SK-N-SH (cell line): ENCODE measurements at regions of chr10 and their contacts with region 1.

Region 1: GRCh38 chr10:60816628-60817397 is 38.5 kb downstream of the CDK1 start:
- DNase-seq: peak; percentile 68
- H3K4me3 ChIP-seq: no peak overlapping the region
- H3K27ac ChIP-seq: peak overlapping the region; percentile 39 to 88; a peak in 3 of 4 replicates
- H3K4me1 ChIP-seq: peaks cover 2 to 32% of the 10 kb centered on the region in 2 experiments
- H3K27me3 ChIP-seq: no peaks in the 10 kb centered on the region
- CTCF ChIP-seq: peak; percentile 89
- EP300 ChIP-seq: peak in 1 of 2 experiments; percentile 35; a peak in 1 of 4 replicates
- RAD21 ChIP-seq: peak; percentile 96

Region 2: DNA sequence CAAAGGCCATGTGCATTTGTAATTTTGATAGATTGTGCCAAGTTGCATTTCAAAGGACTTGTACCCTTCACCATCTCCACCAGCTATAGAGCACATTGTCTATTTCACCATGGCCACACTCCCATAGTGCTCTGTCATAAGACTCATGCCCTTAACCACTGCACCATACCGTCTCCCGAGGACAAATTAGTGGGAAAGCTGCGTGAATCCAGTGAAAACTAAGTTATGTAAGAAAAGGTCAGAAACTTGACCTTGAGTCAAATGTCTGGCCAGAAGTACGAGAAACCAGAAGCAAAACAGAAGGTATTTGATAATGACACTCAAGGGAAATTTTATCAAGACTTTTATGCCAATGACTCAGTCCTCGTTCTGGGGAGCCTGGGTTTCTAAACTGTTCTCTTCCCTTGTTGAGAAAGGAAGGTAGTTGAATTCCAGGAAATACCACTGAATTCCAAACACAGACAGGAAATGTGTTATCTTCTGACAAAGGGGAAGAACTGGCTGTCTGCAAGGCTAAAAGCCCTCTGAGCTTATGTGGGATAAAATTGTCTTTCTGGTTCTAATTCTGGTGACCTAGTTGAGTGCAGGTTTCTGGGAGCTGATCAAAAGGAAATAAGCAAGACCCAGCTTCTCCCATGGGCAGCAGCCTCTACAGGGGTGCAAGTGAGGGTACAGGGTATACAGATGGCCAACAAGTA is 11.1 kb after region 1 on chr10:
- CTCF ChIA-PET with region 1: interaction called, 12 read pairs
- POLR2A ChIA-PET with region 1: no interaction called
- DNase-seq: no peak
- H3K4me3 ChIP-seq: peak overlapping the region in 1 of 2 experiments; percentile 42; a peak in 2 of 4 replicates
- H3K27ac ChIP-seq: peak overlapping the region; percentile 80 to 91
- H3K4me1 ChIP-seq: peaks cover 2 to 16% of the 10 kb centered on the region in 2 experiments; a peak in 2 of 4 replicates
- H3K27me3 ChIP-seq: no peaks in the 10 kb centered on the region
- CTCF ChIP-seq: no peak
- EP300 ChIP-seq: peak; percentile 19 to 73; a peak in 3 of 4 replicates
- RAD21 ChIP-seq: no peak

Region 3: GRCh38 chr10:60921633-60922032 is 104.8 kb after region 1 on chr10:
- CTCF ChIA-PET with region 1: no interaction called
- POLR2A ChIA-PET with region 1: no interaction called
- DNase-seq: no peak
- H3K4me3 ChIP-seq: no peak overlapping the region
- H3K27ac ChIP-seq: no peak overlapping the region
- H3K4me1 ChIP-seq: peaks cover 0 to 4% of the 10 kb centered on the region in 2 experiments; a peak in 1 of 4 replicates
- H3K27me3 ChIP-seq: no peaks in the 10 kb centered on the region
- CTCF ChIP-seq: no peak
- EP300 ChIP-seq: no peak
- RAD21 ChIP-seq: no peak